GM12878 (cell line): ENCODE measurements at regions of chr18 and their contacts with region 1.

Region 1: DNA sequence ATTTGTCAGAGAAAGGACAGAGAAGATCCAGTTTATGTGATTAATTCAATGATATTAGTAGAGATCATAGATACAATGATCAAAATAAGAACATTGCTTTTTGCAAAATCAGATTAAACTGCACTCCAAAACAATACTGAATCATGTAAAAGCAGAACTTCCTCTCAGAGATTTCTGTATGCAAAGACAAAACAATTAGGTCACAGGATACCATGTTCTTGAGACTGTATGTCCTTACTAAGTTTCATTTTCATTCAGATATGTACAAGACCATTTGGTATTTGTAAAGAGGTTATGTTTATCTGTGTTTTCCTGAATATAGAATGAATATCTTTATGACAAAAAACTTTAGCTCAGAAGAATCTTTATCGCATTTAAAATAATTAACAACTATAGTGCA is 161.8 kb downstream of the DLGAP1 start:
- DNase-seq: no peak
- ATAC-seq: peak; percentile 88
- H3K4me3 ChIP-seq: no peak overlapping the region
- H3K27ac ChIP-seq: no peak overlapping the region
- H3K4me1 ChIP-seq: no peaks in the 10 kb centered on the region
- H3K27me3 ChIP-seq: no peaks in the 10 kb centered on the region
- CTCF ChIP-seq: no peak
- EP300 ChIP-seq: 0 out of 4 replicates have a peak, but pooled peaks of 1 of the 2 experiments have one; percentile 9
- POLR2A ChIP-seq: no peak
- RAD21 ChIP-seq: no peak

Region 2: DNA sequence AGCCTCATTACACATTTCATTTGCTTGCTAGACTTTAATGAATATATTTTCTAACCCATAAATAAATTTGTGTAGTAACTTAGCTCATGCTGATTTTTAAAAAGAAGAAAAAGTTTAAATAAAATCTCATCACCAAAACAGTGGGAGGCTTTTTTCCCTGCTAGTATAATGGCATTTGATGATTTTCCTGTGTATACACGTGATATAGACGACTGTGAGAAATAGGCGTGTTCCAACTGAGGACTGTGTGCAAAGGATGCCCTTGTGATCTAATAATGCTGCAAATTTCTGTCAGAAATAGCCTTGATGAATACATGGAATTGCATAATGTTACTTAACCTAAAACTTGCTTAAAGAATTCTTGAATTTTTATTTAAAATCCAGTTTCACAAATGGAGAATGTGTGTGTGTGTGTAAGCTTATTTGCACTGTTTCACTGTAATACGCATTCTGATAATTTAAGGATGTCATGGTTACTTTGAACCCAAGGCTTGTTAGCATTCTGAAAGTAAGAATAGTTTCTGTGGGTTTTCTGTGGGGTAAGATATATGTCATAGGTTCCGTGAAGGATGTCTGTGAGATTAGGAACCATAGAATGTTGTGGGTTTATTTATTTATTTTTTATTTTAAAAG is 16.3 kb before region 1 on chr18:
- CTCF ChIA-PET with region 1: interaction called, 4 read pairs
- POLR2A ChIA-PET with region 1: interaction called, 5 read pairs
- RAD21 ChIA-PET with region 1: interaction called, 4 read pairs
- SMC1A ChIA-PET with region 1: interaction called, 49 read pairs
- in situ Hi-C with region 1: no loop called
- intact Hi-C with region 1: no loop called
- DNase-seq: no peak
- ATAC-seq: peak; percentile 85
- H3K4me3 ChIP-seq: no peak overlapping the region
- H3K27ac ChIP-seq: no peak overlapping the region
- H3K4me1 ChIP-seq: no peaks in the 10 kb centered on the region
- H3K27me3 ChIP-seq: no peaks in the 10 kb centered on the region
- CTCF ChIP-seq: no peak
- EP300 ChIP-seq: peak; percentile 90 to 94; a peak in 3 of 4 replicates
- POLR2A ChIP-seq: no peak
- RAD21 ChIP-seq: no peak

Region 3: GRCh38 chr18:4311136-4311535 is 17.8 kb after region 1 on chr18:
- CTCF ChIA-PET with region 1: interaction called, 5 read pairs
- POLR2A ChIA-PET with region 1: interaction called, 12 read pairs
- RAD21 ChIA-PET with region 1: interaction called, 3 read pairs
- SMC1A ChIA-PET with region 1: interaction called, 36 read pairs
- in situ Hi-C with region 1: no loop called
- intact Hi-C with region 1: no loop called
- DNase-seq: no peak
- ATAC-seq: no peak
- H3K4me3 ChIP-seq: no peak overlapping the region
- H3K27ac ChIP-seq: no peak overlapping the region
- H3K4me1 ChIP-seq: no peaks in the 10 kb centered on the region
- H3K27me3 ChIP-seq: no peaks in the 10 kb centered on the region
- CTCF ChIP-seq: no peak
- EP300 ChIP-seq: no peak
- POLR2A ChIP-seq: no peak
- RAD21 ChIP-seq: no peak

Region 4: DNA sequence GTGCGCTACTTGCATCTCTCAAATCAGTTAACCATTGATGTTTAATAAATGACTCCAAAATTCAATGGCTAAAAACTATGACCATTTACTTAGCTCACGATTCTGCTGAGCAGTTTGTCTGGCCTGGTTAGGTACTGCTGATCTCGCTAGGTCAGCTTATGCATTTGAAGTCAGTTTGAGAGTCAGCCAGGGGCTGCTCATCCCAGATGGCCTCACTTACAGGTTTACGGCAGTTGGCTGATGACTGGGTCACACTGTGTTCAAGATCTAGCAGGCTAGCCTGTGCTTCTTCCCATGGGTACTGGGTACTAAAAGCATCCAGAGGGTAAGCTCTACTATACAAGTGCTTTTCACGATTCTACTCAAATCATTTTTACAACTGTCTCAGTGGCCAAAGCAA is 39.7 kb after region 1 on chr18:
- CTCF ChIA-PET with region 1: no interaction called
- POLR2A ChIA-PET with region 1: no interaction called
- RAD21 ChIA-PET with region 1: interaction called, 9 read pairs
- SMC1A ChIA-PET with region 1: interaction called, 10 read pairs
- in situ Hi-C with region 1: no loop called
- intact Hi-C with region 1: no loop called
- DNase-seq: no peak
- ATAC-seq: peak; percentile 17; the same call in 2 of the 3 replicates
- H3K4me3 ChIP-seq: no peak overlapping the region
- H3K27ac ChIP-seq: no peak overlapping the region
- H3K4me1 ChIP-seq: no peaks in the 10 kb centered on the region
- H3K27me3 ChIP-seq: no peaks in the 10 kb centered on the region
- CTCF ChIP-seq: no peak
- EP300 ChIP-seq: no peak
- POLR2A ChIP-seq: no peak
- RAD21 ChIP-seq: no peak

Region 5: DNA sequence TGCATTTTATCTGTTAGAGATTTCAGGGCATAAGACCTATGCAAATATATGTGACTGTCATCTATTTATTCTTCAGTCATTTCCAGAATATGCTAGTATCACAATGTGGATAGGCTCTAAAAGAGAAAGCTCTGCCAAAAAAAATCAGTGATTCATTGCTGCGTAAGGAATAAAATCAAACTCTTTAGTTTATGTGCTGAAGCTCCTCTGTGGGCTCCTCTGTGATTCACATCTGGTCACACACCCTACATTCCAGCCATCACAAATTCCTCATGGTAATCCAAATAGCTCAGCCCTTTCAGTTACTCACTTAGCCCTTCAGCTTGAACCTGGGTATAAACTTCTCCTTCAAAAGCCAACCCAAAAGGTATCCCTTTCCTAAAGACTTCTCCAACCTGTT is 140.4 kb after region 1 on chr18:
- CTCF ChIA-PET with region 1: no interaction called
- POLR2A ChIA-PET with region 1: no interaction called
- RAD21 ChIA-PET with region 1: no interaction called
- SMC1A ChIA-PET with region 1: no interaction called
- in situ Hi-C with region 1: no loop called
- intact Hi-C with region 1: no loop called
- DNase-seq: no peak
- ATAC-seq: no peak
- H3K4me3 ChIP-seq: no peak overlapping the region
- H3K27ac ChIP-seq: no peak overlapping the region
- H3K4me1 ChIP-seq: no peaks in the 10 kb centered on the region
- H3K27me3 ChIP-seq: no peaks in the 10 kb centered on the region
- CTCF ChIP-seq: no peak
- EP300 ChIP-seq: no peak
- POLR2A ChIP-seq: no peak
- RAD21 ChIP-seq: no peak